CD14-positive monocyte (primary cell): ENCODE measurements at regions of chr5 and their contacts with region 1.

Region 1: GRCh38 chr5:107389130-107389774 is 281.5 kb downstream of the EFNA5 start:
- DNase-seq: peak; percentile 83 to 91 (median 87)
- H3K4me3 ChIP-seq: peak overlapping the region; percentile 3 to 61 (median 16)
- H3K4me3 Mint-ChIP-seq: peak overlapping the region; percentile 47 to 86
- H3K27ac ChIP-seq: peak overlapping the region in 1 of 2 donors; percentile 93
- H3K27ac Mint-ChIP-seq: peak overlapping the region; percentile 94 to 98 (median 96)
- H3K4me1 ChIP-seq: peaks cover 30 to 37% of the 10 kb centered on the region in 2 donors
- H3K4me1 Mint-ChIP-seq: peaks cover 34% of the 10 kb centered on the region
- H3K27me3 ChIP-seq: no peaks in the 10 kb centered on the region
- H3K27me3 Mint-ChIP-seq: peaks cover 0 to 4% (median 2%) of the 10 kb centered on the region in 3 donors
- CTCF ChIP-seq: peak; percentile 23

Region 2: GRCh38 chr5:107300721-107301327 is 88.4 kb before region 1 on chr5:
- intact Hi-C with region 1: loop called in 1 of 2 experiments (anchors 10 kb)
- DNase-seq: peak in 1 of 3 donors; percentile 17
- H3K4me3 ChIP-seq: no peak overlapping the region
- H3K4me3 Mint-ChIP-seq: peak overlapping the region in 1 of 2 donors; percentile 33
- H3K27ac ChIP-seq: no peak overlapping the region
- H3K27ac Mint-ChIP-seq: no peak overlapping the region
- H3K4me1 ChIP-seq: no peaks in the 10 kb centered on the region
- H3K4me1 Mint-ChIP-seq: no peaks in the 10 kb centered on the region
- H3K27me3 ChIP-seq: peaks cover 10 to 17% of the 10 kb centered on the region in 2 donors
- H3K27me3 Mint-ChIP-seq: peaks cover 8 to 18% (median 12%) of the 10 kb centered on the region in 3 donors
- CTCF ChIP-seq: no peak

Region 3: GRCh38 chr5:107364443-107365319 is 24.6 kb before region 1 on chr5:
- intact Hi-C with region 1: loop called in 1 of 2 experiments (anchors 1 kb)
- DNase-seq: peak; percentile 34 to 74 (median 69)
- H3K4me3 ChIP-seq: peak overlapping the region in 1 of 3 experiments; percentile 45
- H3K4me3 Mint-ChIP-seq: peak overlapping the region in 1 of 2 donors; percentile 21
- H3K27ac ChIP-seq: peak overlapping the region; percentile 86 to 98
- H3K27ac Mint-ChIP-seq: peak overlapping the region; percentile 97 to 100 (median 99)
- H3K4me1 ChIP-seq: peaks cover 61 to 67% of the 10 kb centered on the region in 2 donors
- H3K4me1 Mint-ChIP-seq: peaks cover 67% of the 10 kb centered on the region
- H3K27me3 ChIP-seq: no peaks in the 10 kb centered on the region
- H3K27me3 Mint-ChIP-seq: peaks cover 0 to 8% (median 0%) of the 10 kb centered on the region in 3 donors
- CTCF ChIP-seq: no peak

Region 4: DNA sequence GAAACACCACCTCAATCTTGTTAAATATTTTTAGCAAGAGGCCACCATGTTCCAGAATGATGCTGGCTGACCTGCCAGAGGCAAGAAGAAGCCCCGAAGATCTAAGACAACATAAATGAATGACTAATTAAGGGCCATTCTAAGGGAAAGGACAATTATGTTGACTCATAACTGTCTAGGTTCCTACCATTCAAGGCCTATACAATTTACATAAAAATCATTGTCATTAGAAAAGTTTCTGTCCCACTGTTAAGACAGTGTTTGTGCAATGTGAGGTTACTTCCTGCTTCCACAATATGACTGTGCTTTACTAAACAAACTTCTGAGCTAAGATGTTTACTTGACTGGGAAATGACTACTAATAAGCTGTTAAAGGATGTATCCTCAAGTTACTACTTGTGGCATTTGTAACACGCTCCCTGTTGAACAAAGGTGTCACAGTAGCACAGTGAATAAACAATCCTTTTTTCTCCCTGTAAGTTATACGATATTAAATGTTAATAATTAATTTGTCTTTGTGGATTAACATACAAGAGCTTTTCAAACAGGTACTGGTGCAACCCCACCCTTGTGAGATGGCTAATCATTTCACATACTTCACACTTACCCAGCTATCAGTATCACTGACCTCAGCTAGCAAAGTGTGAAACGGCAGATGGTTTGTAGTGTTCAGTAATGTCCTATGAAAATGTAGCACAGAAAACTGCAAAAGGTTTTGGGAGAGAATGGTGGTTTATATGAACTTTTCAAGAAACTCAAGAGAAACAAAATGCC is 85.7 kb after region 1 on chr5:
- intact Hi-C with region 1: loop called in 1 of 2 experiments (anchors 5 kb)
- DNase-seq: peak; percentile 72 to 80 (median 73)
- H3K4me3 ChIP-seq: no peak overlapping the region
- H3K4me3 Mint-ChIP-seq: no peak overlapping the region
- H3K27ac ChIP-seq: peak overlapping the region in 1 of 2 donors; percentile 39
- H3K27ac Mint-ChIP-seq: peak overlapping the region in 4 of 7 donors; percentile 18 to 80 (median 48)
- H3K4me1 ChIP-seq: peaks cover 4 to 22% of the 10 kb centered on the region in 2 donors
- H3K4me1 Mint-ChIP-seq: peaks cover 20% of the 10 kb centered on the region
- H3K27me3 ChIP-seq: no peaks in the 10 kb centered on the region
- H3K27me3 Mint-ChIP-seq: no peaks in the 10 kb centered on the region
- CTCF ChIP-seq: no peak